Vagina (tissue), 2 donors: ENCODE measurements at regions of chr1 and their contacts with region 1.

Region 1: DNA sequence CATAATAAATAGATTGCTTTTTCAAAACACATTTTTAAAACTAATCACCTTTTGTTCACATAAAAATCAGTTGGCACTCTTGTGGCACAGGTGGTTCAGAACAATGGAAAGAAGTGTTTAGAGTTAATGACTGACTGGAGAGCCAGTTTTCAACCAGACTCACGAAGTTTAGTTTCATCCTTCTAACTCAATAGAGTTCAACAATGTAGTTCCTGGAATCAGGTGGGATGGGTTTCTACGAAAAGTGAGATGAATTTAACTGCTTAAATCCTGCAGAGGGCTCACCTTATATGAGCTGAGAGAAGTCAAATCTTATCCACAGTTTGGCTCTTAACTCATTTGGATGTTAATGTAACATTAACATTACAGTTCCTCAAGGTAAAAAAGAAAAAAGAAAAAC is 116.5 kb downstream of the SMYD2 start:
- DNase-seq: no peak
- H3K4me3 ChIP-seq: no peak overlapping the region
- H3K27ac ChIP-seq: no peak overlapping the region
- H3K4me1 ChIP-seq: no peaks in the 10 kb centered on the region
- H3K27me3 ChIP-seq: no peaks in the 10 kb centered on the region
- CTCF ChIP-seq: no peak
- POLR2A ChIP-seq: no peak

Region 2: DNA sequence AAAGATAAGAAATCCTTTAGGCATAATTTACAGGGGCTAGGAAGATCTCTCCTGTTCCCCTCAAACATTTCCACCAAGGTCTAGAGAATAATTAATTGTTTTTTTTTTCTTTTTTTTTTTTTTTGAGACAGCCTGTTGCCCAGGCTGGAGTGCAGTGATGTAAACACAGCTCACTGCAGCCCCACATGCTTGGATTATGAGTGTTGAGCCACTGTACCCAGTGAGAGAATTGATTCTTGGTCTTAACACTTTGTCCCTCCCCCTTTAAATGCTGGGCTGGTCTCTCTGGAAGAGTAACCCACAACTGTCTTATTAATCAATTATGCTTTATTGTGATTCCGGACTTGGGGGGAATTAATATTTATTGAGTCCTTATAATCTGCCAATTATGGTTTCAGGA is 1755.5 kb before region 1 on chr1:
- intact Hi-C with region 1: loop called (anchors 5 kb)
- DNase-seq: no peak
- H3K4me3 ChIP-seq: no peak overlapping the region
- H3K27ac ChIP-seq: no peak overlapping the region
- H3K4me1 ChIP-seq: peaks cover 5% of the 10 kb centered on the region
- H3K27me3 ChIP-seq: no peaks in the 10 kb centered on the region
- CTCF ChIP-seq: no peak
- POLR2A ChIP-seq: no peak

Region 3: GRCh38 chr1:214192825-214193643 is 204.5 kb before region 1 on chr1:
- intact Hi-C with region 1: no loop called
- DNase-seq: no peak
- H3K4me3 ChIP-seq: no peak overlapping the region
- H3K27ac ChIP-seq: no peak overlapping the region
- H3K4me1 ChIP-seq: no peaks in the 10 kb centered on the region
- H3K27me3 ChIP-seq: no peaks in the 10 kb centered on the region
- CTCF ChIP-seq: no peak
- POLR2A ChIP-seq: no peak